PC-9 (cell line): ENCODE measurements at regions of chr12 and their contacts with region 1.

Region 1: GRCh38 chr12:112148031-112148513 is 22.7 kb downstream of the TRAFD1 start:
- DNase-seq: peak; percentile 67 to 80
- H3K4me3 ChIP-seq: no peak overlapping the region
- H3K27ac ChIP-seq: peak overlapping the region; percentile 72
- H3K4me1 ChIP-seq: peaks cover 37% of the 10 kb centered on the region
- H3K27me3 ChIP-seq: no peaks in the 10 kb centered on the region
- CTCF ChIP-seq: no peak

Region 2: DNA sequence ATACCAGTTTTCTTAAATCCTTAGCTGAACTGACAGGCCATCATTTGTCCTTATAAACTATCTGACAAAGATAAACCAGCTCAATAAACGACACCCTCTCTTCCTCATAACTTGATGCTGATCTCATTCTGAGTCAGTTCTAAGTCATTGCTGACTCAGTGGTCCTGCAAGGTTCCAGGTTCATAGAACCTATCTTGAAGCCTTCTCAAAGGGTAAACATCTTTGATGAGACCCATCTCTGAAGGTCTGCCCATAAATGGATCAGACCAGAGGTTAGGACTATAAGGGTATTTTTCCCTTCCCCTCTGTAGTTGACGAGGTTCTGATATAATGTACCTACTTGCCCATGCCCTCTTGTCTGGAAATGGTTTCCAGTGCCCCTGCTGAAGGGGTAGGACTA is 51.4 kb before region 1 on chr12:
- CTCF ChIA-PET with region 1: no interaction called
- POLR2A ChIA-PET with region 1: no interaction called
- intact Hi-C with region 1: loop called (anchors 10 kb)
- DNase-seq: peak; percentile 20 to 92
- H3K4me3 ChIP-seq: peak overlapping the region; percentile 11; the same call in 1 of the 2 replicates
- H3K27ac ChIP-seq: peak overlapping the region; percentile 68
- H3K4me1 ChIP-seq: peaks cover 27% of the 10 kb centered on the region
- H3K27me3 ChIP-seq: no peaks in the 10 kb centered on the region
- CTCF ChIP-seq: no peak

Region 3: GRCh38 chr12:112116232-112117060 is 31.6 kb before region 1 on chr12:
- CTCF ChIA-PET with region 1: no interaction called
- POLR2A ChIA-PET with region 1: no interaction called
- intact Hi-C with region 1: loop called (anchors 1 kb)
- DNase-seq: peak; percentile 32 to 81
- H3K4me3 ChIP-seq: peak overlapping the region; percentile 1; the same call in 1 of the 2 replicates
- H3K27ac ChIP-seq: peak overlapping the region; percentile 92
- H3K4me1 ChIP-seq: peaks cover 77% of the 10 kb centered on the region
- H3K27me3 ChIP-seq: no peaks in the 10 kb centered on the region
- CTCF ChIP-seq: no peak

Region 4: DNA sequence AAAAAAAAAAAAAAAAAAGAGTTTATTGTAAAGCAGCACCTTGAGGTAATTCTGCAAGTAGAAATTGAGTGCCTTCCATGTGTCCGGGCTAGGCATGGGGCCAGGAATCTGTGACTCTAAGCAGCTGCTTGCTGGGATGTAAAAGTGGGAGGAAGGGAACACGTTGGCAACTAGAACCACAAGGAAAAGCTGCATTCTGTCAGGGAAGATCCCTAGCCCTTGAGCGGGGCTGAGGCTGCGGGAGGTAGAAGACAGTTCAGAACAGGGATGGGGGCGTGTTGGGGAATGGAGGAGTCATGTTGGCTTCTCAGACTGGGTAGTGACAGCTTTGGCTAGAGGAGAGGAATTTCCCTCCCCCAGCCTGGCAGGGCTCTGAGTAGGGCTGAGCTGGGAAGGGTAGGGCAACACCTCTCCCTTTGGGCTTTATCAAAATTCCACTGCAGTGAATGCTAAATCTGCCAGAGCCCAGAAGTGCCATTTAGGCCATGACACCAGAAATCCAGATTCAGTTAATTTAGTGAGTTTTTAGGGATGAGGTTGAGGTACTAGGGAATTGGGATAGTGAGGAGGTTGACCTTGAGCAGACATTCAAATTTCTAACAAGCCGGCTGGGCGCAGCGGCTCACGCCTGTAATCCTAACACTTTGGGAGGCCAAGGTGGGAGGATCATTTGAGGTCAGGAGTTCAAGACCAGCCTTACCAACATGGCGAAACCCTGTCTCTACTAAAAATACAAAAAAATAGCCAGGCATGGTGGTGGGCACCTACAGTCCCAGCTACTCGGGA is 26.1 kb before region 1 on chr12:
- CTCF ChIA-PET with region 1: no interaction called
- POLR2A ChIA-PET with region 1: no interaction called
- intact Hi-C with region 1: loop called (anchors 2 kb)
- DNase-seq: peak; percentile 61 to 68
- H3K4me3 ChIP-seq: no peak overlapping the region
- H3K27ac ChIP-seq: peak overlapping the region; percentile 45
- H3K4me1 ChIP-seq: peaks cover 73% of the 10 kb centered on the region
- H3K27me3 ChIP-seq: no peaks in the 10 kb centered on the region
- CTCF ChIP-seq: no peak

Region 5: DNA sequence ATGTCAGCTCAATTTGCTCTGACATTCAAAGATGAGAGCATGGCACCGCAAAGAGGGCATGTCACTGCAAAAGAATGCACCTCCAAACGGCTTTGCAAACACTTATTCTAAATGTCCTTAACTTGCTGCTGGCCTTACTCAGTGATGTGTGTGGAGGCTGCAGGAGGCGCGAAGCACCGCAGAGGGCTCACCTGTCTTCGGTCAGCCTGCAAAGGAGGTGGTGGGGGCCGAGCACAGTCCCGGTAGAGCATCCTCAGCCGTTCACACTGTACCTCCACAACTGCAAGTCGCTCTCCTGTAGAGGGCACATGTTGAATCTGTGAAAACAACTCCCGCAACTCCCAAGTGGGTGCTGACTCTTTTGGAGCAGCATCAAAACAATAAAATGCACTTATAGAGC is 71.1 kb after region 1 on chr12:
- CTCF ChIA-PET with region 1: no interaction called
- POLR2A ChIA-PET with region 1: no interaction called
- intact Hi-C with region 1: no loop called
- DNase-seq: no peak
- H3K4me3 ChIP-seq: no peak overlapping the region
- H3K27ac ChIP-seq: no peak overlapping the region
- H3K4me1 ChIP-seq: no peaks in the 10 kb centered on the region
- H3K27me3 ChIP-seq: no peaks in the 10 kb centered on the region
- CTCF ChIP-seq: no peak